Activated B cell treated with CpG ODN at 0.5 μM for 24 hours (primary cell): ENCODE measurements at regions of chr11 and their contacts with region 1.

Region 1: GRCh38 chr11:59542142-59542810 is 30.9 kb downstream of the OR4D9 start:
- DNase-seq: no peak
- ATAC-seq: no peak
- H3K4me3 Mint-ChIP-seq: no peak overlapping the region
- H3K27ac Mint-ChIP-seq: no peak overlapping the region
- H3K4me1 Mint-ChIP-seq: peaks cover 3% of the 10 kb centered on the region
- H3K27me3 Mint-ChIP-seq: no peaks in the 10 kb centered on the region
- CTCF ChIP-seq: no peak

Region 2: DNA sequence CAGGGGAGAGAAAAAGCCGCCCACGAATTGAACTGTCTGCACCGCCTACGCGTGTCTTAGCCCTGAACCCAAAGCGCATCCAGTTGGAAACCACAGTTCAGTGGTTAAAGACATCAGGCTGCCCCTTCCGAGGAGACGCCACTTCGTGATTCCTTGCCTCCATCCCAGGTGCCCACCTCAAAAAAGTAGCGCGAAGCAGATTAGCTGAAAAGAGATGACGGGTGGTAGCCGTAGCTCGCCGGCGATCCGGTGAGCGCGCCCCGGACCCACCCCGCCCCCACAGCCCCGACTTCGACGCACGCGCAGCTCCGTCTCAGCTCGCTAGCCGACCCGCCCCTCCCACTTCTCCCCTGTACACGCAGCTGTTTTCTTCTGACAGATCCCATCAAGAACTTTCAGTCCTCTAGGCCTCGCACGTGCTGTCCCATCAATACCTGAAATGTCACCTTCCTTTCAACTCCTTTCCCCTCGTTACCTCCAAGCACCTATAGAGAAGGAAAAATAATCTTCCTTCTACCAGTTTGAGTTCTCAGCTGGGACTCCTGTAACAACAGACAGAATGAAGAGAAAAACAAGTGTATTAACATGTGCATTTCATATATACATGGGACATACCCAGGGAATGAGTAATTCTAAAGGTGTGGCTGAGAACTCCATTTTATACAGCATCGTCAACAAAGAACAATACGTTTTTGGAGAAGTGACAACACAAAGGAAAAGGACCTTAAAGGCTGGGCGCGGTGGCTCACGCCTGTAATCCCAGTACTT is 18.6 kb after region 1 on chr11:
- CTCF ChIA-PET with region 1: interaction called, 8 read pairs
- POLR2A ChIA-PET with region 1: interaction called, 10 read pairs
- intact Hi-C with region 1: loop called (anchors 1 kb)
- DNase-seq: peak; percentile 62
- ATAC-seq: peak; percentile 78
- H3K4me3 Mint-ChIP-seq: peak overlapping the region; percentile 92
- H3K27ac Mint-ChIP-seq: peak overlapping the region; percentile 91
- H3K4me1 Mint-ChIP-seq: peaks cover 43% of the 10 kb centered on the region
- H3K27me3 Mint-ChIP-seq: peaks cover 3% of the 10 kb centered on the region
- CTCF ChIP-seq: no peak

Region 3: GRCh38 chr11:59680287-59681154 is 138.2 kb after region 1 on chr11:
- CTCF ChIA-PET with region 1: interaction called, 19 read pairs
- POLR2A ChIA-PET with region 1: no interaction called
- intact Hi-C with region 1: loop called (anchors 1 kb)
- DNase-seq: peak; percentile 32
- ATAC-seq: peak; percentile 88
- H3K4me3 Mint-ChIP-seq: no peak overlapping the region
- H3K27ac Mint-ChIP-seq: no peak overlapping the region
- H3K4me1 Mint-ChIP-seq: no peaks in the 10 kb centered on the region
- H3K27me3 Mint-ChIP-seq: peaks cover 9% of the 10 kb centered on the region
- CTCF ChIP-seq: no peak

Region 4: DNA sequence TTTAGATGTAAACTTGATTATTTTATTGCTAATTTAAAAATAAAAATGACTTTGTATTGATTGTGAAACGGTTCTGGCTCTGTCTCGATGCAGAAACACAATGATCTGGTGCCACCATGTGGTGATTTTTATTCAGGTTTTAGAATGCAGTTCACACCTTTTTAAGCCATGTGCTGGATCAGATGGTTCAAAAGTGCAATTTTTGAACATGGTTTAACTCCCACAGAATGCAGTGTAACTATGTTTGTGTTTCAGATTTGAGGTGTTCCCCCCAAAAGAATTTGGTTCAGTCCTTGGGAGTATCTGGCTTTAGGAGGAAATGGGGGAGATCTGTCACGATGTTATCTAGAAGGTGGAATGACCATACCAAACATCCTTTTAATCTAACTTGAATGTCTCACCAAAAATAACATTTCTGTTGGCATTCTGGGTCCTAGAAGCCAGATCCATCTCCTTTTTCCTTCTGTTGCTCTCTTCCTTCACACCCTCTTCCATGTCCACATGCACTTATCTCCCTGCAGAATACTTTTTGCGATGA is 260.4 kb after region 1 on chr11:
- CTCF ChIA-PET with region 1: interaction called, 4 read pairs
- POLR2A ChIA-PET with region 1: no interaction called
- intact Hi-C with region 1: loop called (anchors 1 kb)
- DNase-seq: no peak
- ATAC-seq: peak; percentile 69
- H3K4me3 Mint-ChIP-seq: no peak overlapping the region
- H3K27ac Mint-ChIP-seq: no peak overlapping the region
- H3K4me1 Mint-ChIP-seq: no peaks in the 10 kb centered on the region
- H3K27me3 Mint-ChIP-seq: no peaks in the 10 kb centered on the region
- CTCF ChIP-seq: no peak